ENCODE measurements at regions of chr5 and their contacts with region 1.

Region 1: DNA sequence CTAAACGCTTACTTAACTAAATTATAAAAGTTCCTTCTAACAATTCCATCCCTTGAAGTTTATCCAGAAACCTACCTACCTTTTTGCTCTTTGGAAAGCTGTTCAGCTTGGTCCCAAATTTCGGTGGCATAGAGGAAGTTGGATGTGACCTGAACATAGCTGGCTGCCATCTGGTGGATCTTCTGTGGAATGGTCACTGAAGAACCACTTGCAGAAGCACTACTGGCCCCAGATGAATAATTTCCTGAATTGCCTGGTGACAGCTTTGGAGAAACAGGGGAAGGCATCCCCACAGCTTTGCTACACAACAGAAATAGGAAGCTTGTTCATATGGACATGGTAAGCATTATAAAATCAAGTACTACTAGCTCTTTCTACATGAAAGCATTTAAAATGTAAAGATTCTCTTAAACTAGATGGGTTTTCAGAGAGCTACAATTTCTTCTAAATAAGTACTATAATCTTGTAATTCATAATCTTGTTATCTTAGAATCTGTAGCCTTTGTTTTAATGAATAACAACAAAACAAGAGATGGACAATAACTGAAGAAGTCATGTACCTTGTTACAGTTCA is 9.9 kb downstream of the LEAP2 start:
- DNase-seq: peak in 1 of 2 donors; percentile 39
- H3K4me3 ChIP-seq: no peak overlapping the region
- H3K27ac ChIP-seq: no peak overlapping the region
- H3K4me1 ChIP-seq: no peaks in the 10 kb centered on the region
- H3K27me3 ChIP-seq: no peaks in the 10 kb centered on the region
- CTCF ChIP-seq: peak; percentile 49 to 67 (median 62)
- POLR2A ChIP-seq: no peak

Region 2: DNA sequence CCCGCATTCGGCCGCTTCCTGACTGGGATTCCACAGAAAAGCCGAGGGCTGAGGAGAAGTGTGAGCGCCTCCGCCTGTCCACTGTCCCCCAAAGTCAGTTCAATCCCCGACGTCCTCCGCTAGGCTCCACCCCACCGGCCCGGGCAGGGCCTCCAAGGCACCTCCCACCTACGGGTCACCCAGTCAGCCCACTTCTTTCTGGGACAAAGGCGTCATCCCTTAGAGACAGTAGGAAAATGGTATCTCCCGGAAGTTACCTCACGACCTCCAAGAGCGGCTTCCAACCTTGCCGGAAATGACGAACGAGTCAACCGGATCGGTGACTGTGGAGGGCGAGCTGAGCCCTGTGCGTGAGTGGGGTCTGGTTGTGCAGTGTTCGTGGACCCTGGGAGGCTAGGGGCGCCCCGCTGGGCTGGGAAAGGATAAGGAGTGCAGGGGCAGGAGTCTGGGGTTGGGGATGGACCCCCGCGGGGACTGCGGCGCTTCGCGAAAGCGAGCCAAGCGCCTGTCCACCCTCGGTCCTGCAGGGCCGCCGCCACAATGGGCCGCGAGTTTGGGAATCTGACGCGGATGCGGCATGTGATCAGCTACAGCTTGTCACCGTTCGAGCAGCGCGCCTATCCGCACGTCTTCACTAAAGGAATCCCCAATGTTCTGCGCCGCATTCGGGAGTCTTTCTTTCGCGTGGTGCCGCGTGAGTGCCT is 16.9 kb before region 1 on chr5 and contains the starts of genes GDF9 and UQCRQ:
- intact Hi-C with region 1: loop called (anchors 1 kb)
- DNase-seq: peak; percentile 89 to 97
- H3K4me3 ChIP-seq: peak within 1 kb of the TSS; percentile 76 to 96 (median 80)
- H3K27ac ChIP-seq: peak within 1 kb of the TSS; percentile 95
- H3K4me1 ChIP-seq: peaks cover 0 to 9% of the 10 kb centered on the region in 2 donors
- H3K27me3 ChIP-seq: no peaks in the 10 kb centered on the region
- CTCF ChIP-seq: no peak
- POLR2A ChIP-seq: peak; percentile 74
- total RNA-seq, gene GDF9: 0.33 to 0.64 (median 0.44) TPM
- total RNA-seq, gene UQCRQ: 106 to 184 (median 150) TPM

Region 3: GRCh38 chr5:132943362-132944022 is 60.1 kb after region 1 on chr5:
- intact Hi-C with region 1: loop called (anchors 2 kb)
- DNase-seq: no peak
- H3K4me3 ChIP-seq: no peak overlapping the region
- H3K27ac ChIP-seq: no peak overlapping the region
- H3K4me1 ChIP-seq: no peaks in the 10 kb centered on the region
- H3K27me3 ChIP-seq: no peaks in the 10 kb centered on the region
- CTCF ChIP-seq: no peak
- POLR2A ChIP-seq: no peak

Measured in breast epithelium (tissue), 4 donors.